Heart right ventricle (tissue), 16 donors: ENCODE measurements at regions of chr14 and their contacts with region 1.

Region 1: GRCh38 chr14:101628471-101628966 is 67.2 kb downstream of the DIO3 start:
- DNase-seq: peak; percentile 70 to 81
- ATAC-seq: peak; percentile 87 to 95 (median 91)
- H3K4me3 ChIP-seq: peak overlapping the region in 9 of 10 donors; percentile 7 to 48 (median 31)
- H3K27ac ChIP-seq: no peak overlapping the region
- H3K4me1 ChIP-seq: peaks cover 3 to 15% (median 11%) of the 10 kb centered on the region in 9 donors
- H3K27me3 ChIP-seq: peaks cover 0 to 7% (median 0%) of the 10 kb centered on the region in 7 donors
- CTCF ChIP-seq: peak; percentile 98 to 100 (median 100)

Region 2: GRCh38 chr14:100383727-100384158 is 1244.8 kb before region 1 on chr14:
- intact Hi-C with region 1: loop called (anchors 5 to 10 kb)
- DNase-seq: peak; percentile 53 to 55
- ATAC-seq: peak; percentile 48 to 83 (median 70)
- H3K4me3 ChIP-seq: no peak overlapping the region
- H3K27ac ChIP-seq: no peak overlapping the region
- H3K4me1 ChIP-seq: peaks cover 0 to 10% (median 0%) of the 10 kb centered on the region in 9 donors
- H3K27me3 ChIP-seq: no peaks in the 10 kb centered on the region
- CTCF ChIP-seq: peak; percentile 66 to 88 (median 82)

Region 3: GRCh38 chr14:100654814-100655740 is 973.4 kb before region 1 on chr14:
- intact Hi-C with region 1: loop called in 6 of 10 experiments (anchors 5 to 10 kb)
- DNase-seq: peak in 1 of 2 donors; percentile 40
- ATAC-seq: peak in 6 of 8 donors; percentile 39 to 69 (median 63)
- H3K4me3 ChIP-seq: no peak overlapping the region
- H3K27ac ChIP-seq: no peak overlapping the region
- H3K4me1 ChIP-seq: no peaks in the 10 kb centered on the region
- H3K27me3 ChIP-seq: peaks cover 6 to 47% (median 42%) of the 10 kb centered on the region in 7 donors
- CTCF ChIP-seq: peak; percentile 44 to 70 (median 60)

Region 4: DNA sequence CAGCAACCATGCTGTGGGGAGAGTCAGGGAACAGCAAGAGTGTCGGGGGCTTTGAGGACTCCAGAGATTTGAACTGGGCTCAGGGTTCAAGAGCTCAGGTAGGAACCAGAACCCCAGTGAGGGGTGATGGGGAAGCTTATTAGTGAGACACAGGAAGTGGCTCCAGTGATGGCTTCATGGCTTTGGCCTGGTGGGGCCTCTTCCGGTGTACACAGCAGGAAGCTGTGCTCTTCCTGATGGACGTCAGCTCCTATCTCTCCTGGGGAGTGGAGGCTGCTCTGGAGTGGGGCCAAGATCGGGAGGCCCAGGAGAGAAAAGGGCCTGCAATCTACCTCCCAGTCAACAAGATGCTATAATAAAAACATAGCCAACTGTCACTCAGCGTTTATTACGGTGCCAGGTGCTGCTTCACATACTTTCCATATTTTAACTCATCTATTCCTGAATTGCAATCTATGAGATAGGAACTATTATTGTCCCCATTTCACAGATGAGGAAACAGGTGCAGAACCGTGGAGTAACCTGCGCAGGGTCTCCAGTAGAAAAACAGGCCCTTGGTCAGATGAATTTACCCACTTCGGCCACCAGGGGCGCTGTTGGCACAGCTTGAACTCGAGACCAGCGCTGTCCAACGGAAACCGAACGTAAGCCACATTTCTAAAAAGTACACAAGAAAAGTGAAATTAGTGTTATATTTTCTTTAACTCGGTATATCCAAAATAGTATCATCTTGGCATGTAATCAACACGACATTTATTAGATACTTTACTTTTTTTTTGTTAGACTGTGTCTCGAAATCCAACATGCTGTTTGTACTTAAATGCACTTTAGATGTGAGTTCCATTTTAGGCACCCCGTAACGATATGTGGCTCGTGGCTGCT is 965.4 kb before region 1 on chr14:
- intact Hi-C with region 1: loop called in 6 of 10 experiments (anchors 5 to 10 kb)
- DNase-seq: peak; percentile 60 to 68
- ATAC-seq: peak in 6 of 8 donors; percentile 45 to 66 (median 48)
- H3K4me3 ChIP-seq: no peak overlapping the region
- H3K27ac ChIP-seq: no peak overlapping the region
- H3K4me1 ChIP-seq: peaks cover 0 to 17% (median 10%) of the 10 kb centered on the region in 9 donors
- H3K27me3 ChIP-seq: peaks cover 0 to 47% (median 24%) of the 10 kb centered on the region in 7 donors
- CTCF ChIP-seq: peak; percentile 86 to 97 (median 93)

Region 5: DNA sequence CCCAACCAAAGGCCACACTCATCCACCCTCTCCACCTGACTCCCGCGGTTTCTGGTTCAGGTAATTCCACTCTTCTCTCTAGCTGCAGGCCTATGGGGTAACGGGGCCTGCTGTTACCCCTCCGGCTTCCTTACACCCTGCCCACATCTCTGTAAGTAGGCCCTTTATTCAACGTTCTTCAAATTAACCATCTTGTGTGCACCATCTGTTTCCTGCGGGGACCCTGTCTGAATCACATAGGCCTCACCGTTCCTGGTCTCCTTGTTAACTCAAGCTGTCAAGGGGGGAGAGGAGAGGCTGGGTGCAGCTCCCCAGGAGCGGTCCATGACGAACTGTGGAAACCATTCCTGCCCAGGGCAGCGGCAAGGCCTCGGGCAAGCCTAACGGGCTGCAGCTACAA is 911.1 kb before region 1 on chr14:
- intact Hi-C with region 1: loop called in 1 of 10 experiments (anchors 5 kb)
- DNase-seq: no peak
- ATAC-seq: no peak
- H3K4me3 ChIP-seq: no peak overlapping the region
- H3K27ac ChIP-seq: no peak overlapping the region
- H3K4me1 ChIP-seq: no peaks in the 10 kb centered on the region
- H3K27me3 ChIP-seq: peaks cover 0 to 60% (median 33%) of the 10 kb centered on the region in 7 donors
- CTCF ChIP-seq: no peak

Region 6: DNA sequence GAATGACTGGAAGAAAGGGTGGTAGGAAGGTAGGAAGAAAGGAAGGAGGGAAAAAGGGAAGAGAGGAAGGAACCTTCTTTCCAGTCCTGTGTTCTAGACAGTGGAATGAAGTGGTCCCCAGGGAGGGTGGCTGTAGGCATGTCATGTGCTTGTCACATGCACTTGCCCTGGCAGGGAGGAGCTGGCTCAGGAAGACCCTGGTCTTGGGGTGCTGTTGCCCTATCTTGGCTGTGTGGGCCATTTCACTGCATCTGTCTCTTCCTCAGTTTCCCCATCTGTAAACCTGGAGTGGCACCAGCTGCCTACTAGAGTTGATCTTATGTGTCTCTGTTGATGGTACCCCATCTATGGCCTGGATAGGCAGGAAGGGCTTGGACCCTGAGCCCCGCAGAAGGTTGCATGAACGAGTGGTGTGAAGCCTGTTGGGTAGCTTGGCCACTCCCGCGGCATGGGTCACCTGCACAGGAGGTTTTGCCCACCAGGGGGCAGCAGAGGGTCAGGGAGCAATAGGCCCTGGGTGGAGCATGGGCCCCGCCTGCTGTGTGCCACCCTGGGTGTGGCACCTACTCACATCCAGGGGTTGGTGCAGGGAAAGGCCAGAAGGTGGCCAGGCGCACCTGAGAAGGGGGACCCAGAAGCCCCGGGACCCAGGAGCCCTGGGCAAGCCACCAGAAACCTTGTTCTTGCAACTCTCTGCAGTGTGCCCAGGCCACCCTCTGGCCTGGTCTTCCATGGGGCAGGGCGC is 777.5 kb before region 1 on chr14:
- intact Hi-C with region 1: loop called in 3 of 10 experiments (anchors 5 to 10 kb)
- DNase-seq: peak; percentile 44 to 69
- ATAC-seq: peak in 6 of 8 donors; percentile 42 to 72 (median 62)
- H3K4me3 ChIP-seq: no peak overlapping the region
- H3K27ac ChIP-seq: no peak overlapping the region
- H3K4me1 ChIP-seq: peaks cover 0 to 9% (median 0%) of the 10 kb centered on the region in 9 donors
- H3K27me3 ChIP-seq: peaks cover 0 to 13% (median 0%) of the 10 kb centered on the region in 7 donors
- CTCF ChIP-seq: peak; percentile 40 to 85 (median 61)

Region 7: DNA sequence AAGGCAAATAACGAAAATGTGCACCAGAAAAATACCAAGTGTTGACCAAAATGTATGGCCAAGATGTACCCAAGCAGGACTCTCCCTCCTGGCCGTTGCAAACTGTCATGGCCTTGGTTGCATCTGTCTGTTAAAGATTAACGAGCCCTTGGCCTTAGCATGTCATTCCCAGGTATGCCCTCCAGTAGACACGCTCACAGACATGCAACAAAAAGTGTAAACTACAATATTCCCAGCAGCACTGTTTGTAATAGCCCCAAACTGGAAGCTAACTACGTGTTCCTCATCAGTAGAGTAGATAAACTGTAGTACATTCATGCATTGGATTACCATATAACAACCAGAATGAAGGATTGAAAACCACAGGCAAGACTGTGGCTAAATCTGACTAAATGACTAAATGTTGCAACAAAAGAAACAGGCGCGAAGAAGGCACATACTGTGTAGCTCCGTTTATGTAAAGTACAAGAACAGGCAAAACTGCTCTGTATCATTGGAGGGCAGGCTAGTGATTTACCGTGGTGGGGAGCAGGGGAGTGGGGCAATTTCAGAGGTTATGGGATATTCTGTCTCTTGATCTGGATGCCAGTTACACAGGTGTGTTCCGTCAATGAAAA is 300.0 kb before region 1 on chr14:
- intact Hi-C with region 1: no loop called
- DNase-seq: no peak
- ATAC-seq: no peak
- H3K4me3 ChIP-seq: no peak overlapping the region
- H3K27ac ChIP-seq: no peak overlapping the region
- H3K4me1 ChIP-seq: no peaks in the 10 kb centered on the region
- H3K27me3 ChIP-seq: peaks cover 0 to 7% (median 0%) of the 10 kb centered on the region in 7 donors
- CTCF ChIP-seq: no peak

Region 8: GRCh38 chr14:101808020-101808641 is 179.6 kb after region 1 on chr14:
- intact Hi-C with region 1: no loop called
- DNase-seq: no peak
- ATAC-seq: peak in 1 of 8 donors; percentile 28
- H3K4me3 ChIP-seq: no peak overlapping the region
- H3K27ac ChIP-seq: peak overlapping the region in 6 of 10 donors; percentile 16 to 100 (median 90)
- H3K4me1 ChIP-seq: peaks cover 15 to 44% (median 38%) of the 10 kb centered on the region in 9 donors
- H3K27me3 ChIP-seq: no peaks in the 10 kb centered on the region
- CTCF ChIP-seq: peak in 2 of 9 donors; percentile 11 to 22

Region 9: GRCh38 chr14:102034301-102034700 is 405.8 kb after region 1 on chr14:
- intact Hi-C with region 1: no loop called
- DNase-seq: no peak
- ATAC-seq: no peak
- H3K4me3 ChIP-seq: no peak overlapping the region
- H3K27ac ChIP-seq: no peak overlapping the region
- H3K4me1 ChIP-seq: no peaks in the 10 kb centered on the region
- H3K27me3 ChIP-seq: no peaks in the 10 kb centered on the region
- CTCF ChIP-seq: no peak